ENCODE measurements at regions of chr19 and their contacts with region 1.

Region 1: GRCh38 chr19:38849860-38850435 is at the start of gene HNRNPL:
- DNase-seq: peak; percentile 100
- ATAC-seq: peak; percentile 65
- H3K4me3 Mint-ChIP-seq: peak within 1 kb of the TSS; percentile 97
- H3K27ac Mint-ChIP-seq: peak within 1 kb of the TSS; percentile 100
- H3K4me1 Mint-ChIP-seq: peaks cover 38% of the 10 kb centered on the region
- H3K27me3 Mint-ChIP-seq: no peaks in the 10 kb centered on the region
- total RNA-seq, gene HNRNPL: 441 to 455 TPM

Region 2: GRCh38 chr19:38869856-38870607 is 20.1 kb after region 1 on chr19:
- POLR2A ChIA-PET with region 1: interaction called, 161 read pairs
- DNase-seq: peak; percentile 99
- ATAC-seq: peak; percentile 97
- H3K4me3 Mint-ChIP-seq: peak overlapping the region; percentile 89
- H3K27ac Mint-ChIP-seq: peak overlapping the region; percentile 89
- H3K4me1 Mint-ChIP-seq: peaks cover 35% of the 10 kb centered on the region
- H3K27me3 Mint-ChIP-seq: no peaks in the 10 kb centered on the region

Region 3: GRCh38 chr19:38877781-38878574 is 28.0 kb after region 1 on chr19 and contains the start of gene RINL:
- POLR2A ChIA-PET with region 1: interaction called, 20 read pairs
- DNase-seq: peak; percentile 70
- ATAC-seq: peak; percentile 92
- H3K4me3 Mint-ChIP-seq: peak within 1 kb of the TSS; percentile 97
- H3K27ac Mint-ChIP-seq: peak within 1 kb of the TSS; percentile 97
- H3K4me1 Mint-ChIP-seq: peaks cover 22% of the 10 kb centered on the region
- H3K27me3 Mint-ChIP-seq: no peaks in the 10 kb centered on the region
- total RNA-seq, gene RINL: 71.3 to 74.2 TPM

Region 4: GRCh38 chr19:39098365-39099269 is 248.7 kb after region 1 on chr19:
- POLR2A ChIA-PET with region 1: no interaction called
- DNase-seq: no peak
- ATAC-seq: no peak
- H3K4me3 Mint-ChIP-seq: no peak overlapping the region
- H3K27ac Mint-ChIP-seq: no peak overlapping the region
- H3K4me1 Mint-ChIP-seq: no peaks in the 10 kb centered on the region
- H3K27me3 Mint-ChIP-seq: peaks cover 43% of the 10 kb centered on the region

Measured in activated naive CD8-positive, alpha-beta T cell treated with anti-CD3 and anti-CD28 coated beads, Interleukin-2, amount 10 ng/mL, durations not matched to agents 7 days and 5 days (primary cell).